ENCODE measurements at regions of chr16 and their contacts with region 1.

Region 1: DNA sequence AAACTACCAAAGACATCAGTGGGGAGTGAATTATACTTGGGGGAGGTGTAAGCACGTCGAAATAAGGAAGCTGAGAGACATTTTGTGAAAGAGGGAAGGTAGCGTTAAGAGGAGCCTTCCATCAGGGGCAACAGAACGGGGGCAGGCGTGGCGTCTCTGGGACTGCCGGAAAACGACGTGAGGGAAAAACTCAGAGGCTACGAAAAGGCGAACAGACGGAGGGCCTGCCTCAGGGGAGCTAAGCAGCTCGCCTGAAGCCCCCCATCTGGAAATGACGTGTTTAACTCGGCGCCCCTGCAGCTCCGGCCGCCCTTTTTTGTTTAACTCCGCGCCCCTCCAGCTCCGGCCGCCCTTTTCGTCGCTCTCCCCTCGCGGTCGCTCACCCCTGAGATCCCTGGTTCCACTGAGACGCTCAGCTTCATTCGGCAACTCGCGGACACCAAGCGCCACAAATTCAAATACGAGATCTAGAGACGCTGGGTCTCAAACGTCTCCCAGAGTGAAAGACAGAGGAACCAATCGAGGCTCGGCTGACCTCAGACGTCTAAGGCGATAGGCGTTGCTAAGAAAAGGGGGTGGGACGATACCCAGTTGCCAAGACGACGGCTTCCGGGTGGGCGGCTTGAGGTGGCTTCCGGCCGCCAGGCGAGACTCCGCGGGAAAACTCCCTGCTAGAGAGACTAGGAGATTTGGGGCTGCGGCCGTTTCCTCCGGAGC is 383.3 kb downstream of the ZFHX3 start:
- DNase-seq: peak; percentile 98
- H3K4me3 Mint-ChIP-seq: peak overlapping the region; percentile 100
- H3K27ac Mint-ChIP-seq: peak overlapping the region; percentile 98
- H3K4me1 Mint-ChIP-seq: peaks cover 13% of the 10 kb centered on the region
- H3K27me3 Mint-ChIP-seq: peaks cover 4% of the 10 kb centered on the region

Region 2: GRCh38 chr16:72474501-72475123 is 190.1 kb before region 1 on chr16:
- intact Hi-C with region 1: loop called (anchors 2 kb)
- DNase-seq: no peak
- H3K4me3 Mint-ChIP-seq: no peak overlapping the region
- H3K27ac Mint-ChIP-seq: peak overlapping the region; percentile 5
- H3K4me1 Mint-ChIP-seq: peaks cover 9% of the 10 kb centered on the region
- H3K27me3 Mint-ChIP-seq: peaks cover 3% of the 10 kb centered on the region

Region 3: DNA sequence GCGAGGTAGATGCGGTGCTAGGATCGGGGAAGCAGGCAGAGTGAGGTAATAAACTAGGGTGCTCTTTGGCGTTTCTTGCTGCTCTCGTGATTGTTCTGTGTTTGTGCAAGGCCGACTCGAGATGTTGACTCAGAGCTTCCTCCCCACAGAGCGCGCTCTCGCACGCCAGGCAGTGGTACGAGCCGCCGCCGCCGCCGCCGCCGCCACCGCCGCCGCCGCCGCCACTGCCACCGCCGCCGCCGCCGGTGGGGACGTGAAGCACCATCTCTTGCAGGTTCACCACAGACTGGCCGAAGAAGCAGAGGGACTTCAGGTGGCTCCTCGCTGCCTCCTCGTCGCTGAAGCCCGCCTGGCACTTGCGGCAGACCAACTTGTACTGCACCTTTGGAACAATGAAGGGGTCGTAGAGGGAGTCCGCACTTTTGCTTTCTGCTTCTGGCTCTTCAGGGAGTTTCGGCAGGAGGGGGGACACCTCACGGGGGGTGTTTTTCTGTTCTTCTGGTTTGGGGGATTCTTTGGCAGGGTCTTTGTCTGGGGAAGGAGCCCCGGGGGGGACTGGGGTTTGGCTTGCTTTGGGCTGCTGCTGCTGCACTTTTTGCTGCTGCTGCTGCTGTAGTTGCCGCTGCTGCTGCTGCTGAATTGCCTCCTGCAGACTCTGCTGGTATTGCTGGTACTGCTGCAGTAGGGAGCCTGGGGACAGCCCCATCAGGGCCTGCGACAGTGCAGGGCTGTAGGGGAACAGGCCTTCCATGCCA is 123.0 kb after region 1 on chr16:
- intact Hi-C with region 1: loop called (anchors 5 kb)
- DNase-seq: peak; percentile 90
- H3K4me3 Mint-ChIP-seq: peak overlapping the region; percentile 80
- H3K27ac Mint-ChIP-seq: peak overlapping the region; percentile 65
- H3K4me1 Mint-ChIP-seq: peaks cover 18% of the 10 kb centered on the region
- H3K27me3 Mint-ChIP-seq: peaks cover 36% of the 10 kb centered on the region

Region 4: GRCh38 chr16:73058221-73058615 is 393.6 kb after region 1 on chr16:
- intact Hi-C with region 1: loop called (anchors 10 kb)
- DNase-seq: peak; percentile 83
- H3K4me3 Mint-ChIP-seq: peak overlapping the region; percentile 44
- H3K27ac Mint-ChIP-seq: no peak overlapping the region
- H3K4me1 Mint-ChIP-seq: peaks cover 23% of the 10 kb centered on the region
- H3K27me3 Mint-ChIP-seq: peaks cover 66% of the 10 kb centered on the region